Caco-2 (cell line): ENCODE measurements at regions of chr3 and their contacts with region 1.

Region 1: GRCh38 chr3:150787741-150788370 is 24.9 kb upstream of the SIAH2 start:
- DNase-seq: peak; percentile 80 to 82
- H3K4me3 ChIP-seq: no peak overlapping the region
- H3K4me3 Mint-ChIP-seq: no peak overlapping the region
- H3K27ac Mint-ChIP-seq: no peak overlapping the region
- H3K4me1 ChIP-seq: no peaks in the 10 kb centered on the region
- H3K4me1 Mint-ChIP-seq: no peaks in the 10 kb centered on the region
- H3K27me3 ChIP-seq: no peaks in the 10 kb centered on the region
- H3K27me3 Mint-ChIP-seq: peaks cover 3% of the 10 kb centered on the region
- CTCF ChIP-seq: peak; percentile 92

Region 2: GRCh38 chr3:150830094-150830681 is 42.3 kb after region 1 on chr3:
- CTCF ChIA-PET with region 1: interaction called, 7 read pairs
- POLR2A ChIA-PET with region 1: no interaction called
- intact Hi-C with region 1: loop called (anchors 1 kb)
- DNase-seq: peak in 1 of 2 experiments; percentile 20
- H3K4me3 ChIP-seq: no peak overlapping the region
- H3K4me3 Mint-ChIP-seq: no peak overlapping the region
- H3K27ac Mint-ChIP-seq: no peak overlapping the region
- H3K4me1 ChIP-seq: no peaks in the 10 kb centered on the region
- H3K4me1 Mint-ChIP-seq: no peaks in the 10 kb centered on the region
- H3K27me3 ChIP-seq: no peaks in the 10 kb centered on the region
- H3K27me3 Mint-ChIP-seq: peaks cover 17% of the 10 kb centered on the region
- CTCF ChIP-seq: peak in 1 of 2 experiments; percentile 62

Region 3: GRCh38 chr3:150870396-150870795 is 82.5 kb after region 1 on chr3:
- CTCF ChIA-PET with region 1: interaction called, 17 read pairs
- POLR2A ChIA-PET with region 1: no interaction called
- intact Hi-C with region 1: loop called (anchors 1 kb)
- DNase-seq: no peak
- H3K4me3 ChIP-seq: no peak overlapping the region
- H3K4me3 Mint-ChIP-seq: no peak overlapping the region
- H3K27ac Mint-ChIP-seq: no peak overlapping the region
- H3K4me1 ChIP-seq: no peaks in the 10 kb centered on the region
- H3K4me1 Mint-ChIP-seq: no peaks in the 10 kb centered on the region
- H3K27me3 ChIP-seq: no peaks in the 10 kb centered on the region
- H3K27me3 Mint-ChIP-seq: peaks cover 11% of the 10 kb centered on the region
- CTCF ChIP-seq: no peak